ENCODE measurements at regions of chr2 and their contacts with region 1.

Region 1: GRCh38 chr2:43226558-43226954 is at the start of gene ZFP36L2:
- DNase-seq: peak; percentile 96 to 97
- ATAC-seq: peak; percentile 57
- total RNA-seq, gene ZFP36L2: 199 to 250 TPM

Region 2: DNA sequence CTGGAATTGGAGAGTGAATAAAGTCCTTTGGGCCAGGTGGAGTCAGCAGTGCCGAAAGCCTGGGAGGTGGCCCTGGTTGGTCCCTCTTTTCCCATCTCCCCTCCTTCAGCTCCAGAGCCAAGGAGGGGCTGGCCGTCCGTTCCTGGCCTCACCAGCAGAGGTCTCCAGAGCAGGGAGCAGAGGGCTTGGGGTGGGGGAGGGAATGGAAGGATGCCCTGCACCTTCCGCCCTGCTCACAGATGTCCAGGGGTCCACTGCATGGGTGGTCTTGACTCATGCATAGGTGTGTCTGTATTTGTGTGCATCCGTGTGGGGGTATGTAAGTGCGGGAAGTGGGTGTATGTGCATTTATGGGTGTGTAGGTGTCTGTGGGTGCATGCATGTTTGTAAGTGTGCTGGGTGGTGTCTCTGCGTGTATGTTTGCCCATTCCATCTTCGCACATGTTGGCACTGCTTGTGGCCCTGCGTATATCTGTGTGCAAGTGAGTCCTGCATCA is 202.0 kb before region 1 on chr2:
- intact Hi-C with region 1: loop called in 1 of 2 experiments (anchors 10 kb)
- DNase-seq: peak; percentile 73 to 85
- ATAC-seq: peak; percentile 68

Region 3: GRCh38 chr2:43131024-43131889 is 95.3 kb before region 1 on chr2:
- intact Hi-C with region 1: loop called in 1 of 2 experiments (anchors 10 kb)
- DNase-seq: peak; percentile 86 to 97
- ATAC-seq: peak; percentile 67

Region 4: DNA sequence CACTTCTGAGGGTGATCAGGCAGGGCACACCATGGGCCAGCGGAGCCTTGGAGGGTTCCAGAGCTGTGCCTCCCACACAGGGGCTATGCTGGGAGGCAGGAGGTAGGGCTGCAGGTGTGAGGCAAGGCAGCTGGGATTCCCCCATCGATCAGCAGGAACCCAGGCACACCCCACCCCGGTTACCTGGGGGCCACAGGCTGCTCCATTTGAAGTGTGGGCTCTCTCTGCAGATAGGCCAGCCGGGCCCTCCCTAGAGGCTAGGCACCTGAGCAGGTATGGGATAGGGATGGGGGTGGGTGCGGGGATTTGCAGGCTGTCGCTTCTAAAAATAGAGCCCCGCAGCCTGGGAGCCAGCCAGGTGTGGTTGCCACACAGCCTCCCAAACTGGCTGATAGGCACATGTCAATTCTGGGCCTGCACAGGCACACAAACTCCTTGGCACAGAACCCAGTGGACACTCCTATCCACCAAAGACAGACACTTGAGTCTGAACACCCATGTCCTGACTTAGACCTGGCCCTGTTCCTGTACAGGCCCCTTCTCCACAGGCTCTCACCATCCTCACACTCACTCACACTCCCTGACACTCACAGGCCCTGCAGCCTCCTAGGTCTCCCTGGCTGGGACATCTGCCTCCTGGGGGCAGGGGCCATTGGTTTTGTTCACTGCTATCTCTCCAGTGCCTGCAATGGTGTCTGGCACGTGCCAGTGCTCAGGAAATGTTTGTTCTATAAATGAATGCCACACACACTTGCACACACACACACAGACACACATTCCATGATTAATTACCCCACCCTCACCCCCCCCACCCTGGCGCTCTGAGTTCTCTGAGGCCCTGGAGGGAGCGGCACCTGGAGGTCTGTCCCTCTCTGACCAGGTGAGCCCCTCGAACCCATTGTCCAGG is 73.6 kb before region 1 on chr2:
- intact Hi-C with region 1: no loop called
- DNase-seq: peak in 1 of 2 donors; percentile 26
- ATAC-seq: peak; percentile 9

Region 5: GRCh38 chr2:43169987-43170386 is 56.6 kb before region 1 on chr2:
- intact Hi-C with region 1: loop called in 1 of 2 experiments (anchors 10 kb)
- DNase-seq: peak; percentile 70 to 79
- ATAC-seq: peak; percentile 53

Region 6: GRCh38 chr2:43648994-43649701 is 422.6 kb after region 1 on chr2:
- intact Hi-C with region 1: no loop called
- DNase-seq: no peak
- ATAC-seq: no peak

Region 7: GRCh38 chr2:44572196-44572900 is 1345.8 kb after region 1 on chr2:
- intact Hi-C with region 1: no loop called
- DNase-seq: no peak
- ATAC-seq: no peak

Measured in left colon (tissue), 2 donors.